ENCODE measurements at regions of chr4 and their contacts with region 1.

Region 1: DNA sequence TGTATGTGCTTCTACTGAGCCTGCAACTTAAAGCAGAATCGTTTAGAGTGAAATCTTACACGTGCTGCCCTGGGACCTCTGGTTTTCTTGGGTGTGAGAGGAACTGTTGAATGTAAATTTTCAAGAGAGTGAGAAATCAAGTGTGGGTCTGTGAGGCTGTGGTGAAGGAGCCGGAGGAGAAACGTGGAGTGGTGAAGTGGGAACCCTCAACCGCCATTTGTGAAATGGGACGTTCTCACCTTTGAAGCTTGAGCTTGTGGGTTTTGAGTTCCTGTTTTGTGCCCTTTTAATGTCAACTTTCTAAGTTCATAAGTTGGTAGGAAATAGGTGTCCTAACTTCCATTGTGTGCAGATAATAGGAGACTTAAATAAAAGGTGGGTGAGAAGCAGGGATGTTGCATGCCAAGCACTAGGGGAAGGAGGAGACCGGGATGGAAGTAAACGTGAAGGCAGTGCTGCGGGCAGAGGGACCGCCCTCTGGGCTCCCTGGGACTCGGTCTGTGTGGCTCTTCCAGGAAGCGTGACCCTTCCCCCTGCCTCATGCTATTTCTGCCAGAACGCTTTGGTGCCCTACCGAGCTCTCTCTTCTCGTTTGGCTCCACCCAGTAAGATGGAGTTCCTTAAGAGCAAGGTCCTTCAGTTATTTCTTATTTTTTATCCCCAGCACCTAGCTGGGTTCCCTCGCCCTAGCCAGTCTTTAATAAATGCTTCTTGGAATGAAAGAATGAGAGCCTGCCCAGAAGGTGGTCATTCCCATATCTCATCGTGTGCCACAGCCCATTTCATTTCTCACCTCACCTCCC is 56.0 kb downstream of the TMEM131L start:
- DNase-seq: peak; percentile 80
- H3K4me3 Mint-ChIP-seq: peak overlapping the region; percentile 66
- H3K27ac Mint-ChIP-seq: peak overlapping the region; percentile 97
- H3K4me1 Mint-ChIP-seq: peaks cover 95% of the 10 kb centered on the region
- H3K27me3 Mint-ChIP-seq: no peaks in the 10 kb centered on the region

Region 2: GRCh38 chr4:153497988-153498967 is 23.9 kb before region 1 on chr4:
- CTCF ChIA-PET with region 1: interaction called, 13 read pairs
- DNase-seq: no peak
- H3K4me3 Mint-ChIP-seq: peak overlapping the region; percentile 66
- H3K27ac Mint-ChIP-seq: peak overlapping the region; percentile 99
- H3K4me1 Mint-ChIP-seq: peaks cover 94% of the 10 kb centered on the region
- H3K27me3 Mint-ChIP-seq: no peaks in the 10 kb centered on the region